Adrenal gland (tissue), 19 donors: ENCODE measurements at regions of chr10 and their contacts with region 1.

Region 1: GRCh38 chr10:11611248-11612020 is at the start of gene USP6NL:
- DNase-seq: peak; percentile 89 to 94 (median 92)
- H3K4me3 ChIP-seq: peak within 1 kb of the TSS; percentile 64 to 100 (median 86)
- H3K27ac ChIP-seq: peak within 1 kb of the TSS; percentile 62 to 98 (median 90)
- H3K4me1 ChIP-seq: peaks cover 5 to 13% of the 10 kb centered on the region in 2 donors
- H3K27me3 ChIP-seq: no peaks in the 10 kb centered on the region
- CTCF ChIP-seq: no peak
- POLR2A ChIP-seq: peak; percentile 65 to 91
- total RNA-seq, gene USP6NL: 13.3 to 35.1 (median 19.9) TPM

Region 2: DNA sequence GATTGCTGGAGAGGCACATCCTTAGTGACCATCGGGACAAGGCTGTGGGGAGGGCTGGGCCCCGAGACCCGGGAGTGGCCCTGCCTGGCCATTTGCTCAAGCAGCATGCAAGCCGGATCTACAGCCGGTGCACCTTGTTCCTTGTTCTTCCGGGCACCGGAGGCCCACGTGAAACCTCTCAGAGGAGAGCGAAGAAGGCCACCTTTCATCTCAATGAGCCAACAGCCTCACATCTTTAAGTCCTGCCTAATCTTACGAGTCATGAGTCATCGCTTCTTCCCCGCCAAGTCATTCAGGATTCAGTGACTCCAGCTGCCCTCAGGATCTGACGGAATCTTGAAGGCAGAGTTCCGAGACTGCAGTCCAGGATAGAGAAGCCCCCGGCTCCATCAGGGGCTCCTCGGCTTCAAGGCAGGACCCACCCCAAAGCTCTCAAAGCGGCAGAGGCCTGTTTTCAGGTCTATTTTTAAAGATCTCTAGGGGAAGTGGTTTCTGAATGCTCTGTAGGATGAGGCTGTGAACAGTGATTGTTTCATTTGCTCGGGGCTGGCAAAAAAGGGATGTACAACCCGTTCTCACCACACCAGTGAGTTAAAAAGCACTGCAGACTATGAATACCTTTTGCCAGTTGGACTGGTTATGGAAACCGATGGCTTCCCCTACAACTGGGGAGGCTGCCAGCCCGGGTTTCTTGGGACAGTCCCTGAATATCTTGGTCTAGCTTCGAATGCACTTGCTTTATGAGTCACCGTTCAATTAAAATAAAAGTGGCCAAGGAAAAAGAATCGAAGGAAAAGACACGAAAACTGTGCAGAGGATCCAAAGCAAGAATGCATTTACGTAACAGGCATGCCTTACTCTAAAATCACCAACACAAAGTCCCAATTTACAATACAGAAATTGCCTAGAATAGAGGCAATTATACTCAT is 73.5 kb after region 1 on chr10:
- intact Hi-C with region 1: loop called in 1 of 2 experiments (anchors 5 kb)
- DNase-seq: peak; percentile 61 to 84 (median 74)
- H3K4me3 ChIP-seq: peak overlapping the region in 2 of 4 donors; percentile 24 to 41
- H3K27ac ChIP-seq: peak overlapping the region; percentile 65 to 84 (median 78)
- H3K4me1 ChIP-seq: peaks cover 31 to 46% of the 10 kb centered on the region in 2 donors
- H3K27me3 ChIP-seq: no peaks in the 10 kb centered on the region
- CTCF ChIP-seq: no peak
- POLR2A ChIP-seq: peak in 1 of 2 donors; percentile 49

Region 3: GRCh38 chr10:11724938-11725776 is 113.7 kb after region 1 on chr10:
- intact Hi-C with region 1: loop called in 1 of 2 experiments (anchors 10 kb)
- DNase-seq: peak in 3 of 7 donors; percentile 29 to 44 (median 39)
- H3K4me3 ChIP-seq: no peak overlapping the region
- H3K27ac ChIP-seq: no peak overlapping the region
- H3K4me1 ChIP-seq: no peaks in the 10 kb centered on the region
- H3K27me3 ChIP-seq: no peaks in the 10 kb centered on the region
- CTCF ChIP-seq: peak; percentile 59 to 88 (median 84)
- POLR2A ChIP-seq: no peak

Region 4: GRCh38 chr10:11760861-11761260 is 149.4 kb after region 1 on chr10:
- intact Hi-C with region 1: no loop called
- DNase-seq: no peak
- H3K4me3 ChIP-seq: no peak overlapping the region
- H3K27ac ChIP-seq: no peak overlapping the region
- H3K4me1 ChIP-seq: peaks cover 21 to 22% of the 10 kb centered on the region in 2 donors
- H3K27me3 ChIP-seq: no peaks in the 10 kb centered on the region
- CTCF ChIP-seq: no peak
- POLR2A ChIP-seq: no peak